GM23248 (cell line): ENCODE measurements at regions of chr9 and their contacts with region 1.

Region 1: GRCh38 chr9:76203373-76203772 is 190.9 kb downstream of the RFK start:
- DNase-seq: peak; percentile 17
- H3K4me3 ChIP-seq: no peak overlapping the region
- H3K27ac ChIP-seq: no peak overlapping the region
- H3K4me1 ChIP-seq: no peaks in the 10 kb centered on the region
- H3K27me3 ChIP-seq: no peaks in the 10 kb centered on the region

Region 2: DNA sequence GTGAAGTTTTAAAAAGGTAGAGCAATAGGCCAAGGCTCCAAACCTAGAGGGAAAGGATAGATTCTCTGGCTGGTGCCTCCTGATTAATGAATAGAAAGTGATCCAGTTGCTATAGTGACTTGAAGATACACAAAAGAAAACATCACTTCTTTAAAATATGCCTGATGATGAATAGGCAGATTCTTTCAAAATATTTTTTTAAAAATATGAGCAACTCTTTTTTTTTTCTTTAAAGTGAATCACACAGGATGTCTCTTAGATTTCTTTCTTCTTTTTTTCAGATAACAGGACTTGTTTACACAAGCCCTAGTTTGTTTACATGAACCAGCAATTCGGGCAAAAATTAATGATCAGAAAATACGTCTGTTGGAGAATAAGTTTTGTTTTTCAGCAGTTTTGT is 66.4 kb after region 1 on chr9:
- in situ Hi-C with region 1: loop called (anchors 10 kb)
- DNase-seq: peak; percentile 57
- H3K4me3 ChIP-seq: no peak overlapping the region
- H3K27ac ChIP-seq: no peak overlapping the region
- H3K4me1 ChIP-seq: peaks cover 3% of the 10 kb centered on the region; the same call in 1 of the 2 replicates
- H3K27me3 ChIP-seq: no peaks in the 10 kb centered on the region